ENCODE measurements at regions of chr14 and their contacts with region 1.

Region 1: GRCh38 chr14:105505091-105505490 is 14.0 kb downstream of the TEDC1 start:
- DNase-seq: no peak
- H3K4me3 ChIP-seq: no peak overlapping the region
- H3K4me3 Mint-ChIP-seq: no peak overlapping the region
- H3K27ac ChIP-seq: no peak overlapping the region
- H3K27ac Mint-ChIP-seq: no peak overlapping the region
- H3K4me1 ChIP-seq: no peaks in the 10 kb centered on the region
- H3K4me1 Mint-ChIP-seq: no peaks in the 10 kb centered on the region
- H3K27me3 ChIP-seq: peaks cover 0 to 4% of the 10 kb centered on the region in 2 donors
- H3K27me3 Mint-ChIP-seq: peaks cover 25 to 39% (median 28%) of the 10 kb centered on the region in 3 donors
- CTCF ChIP-seq: no peak

Region 2: DNA sequence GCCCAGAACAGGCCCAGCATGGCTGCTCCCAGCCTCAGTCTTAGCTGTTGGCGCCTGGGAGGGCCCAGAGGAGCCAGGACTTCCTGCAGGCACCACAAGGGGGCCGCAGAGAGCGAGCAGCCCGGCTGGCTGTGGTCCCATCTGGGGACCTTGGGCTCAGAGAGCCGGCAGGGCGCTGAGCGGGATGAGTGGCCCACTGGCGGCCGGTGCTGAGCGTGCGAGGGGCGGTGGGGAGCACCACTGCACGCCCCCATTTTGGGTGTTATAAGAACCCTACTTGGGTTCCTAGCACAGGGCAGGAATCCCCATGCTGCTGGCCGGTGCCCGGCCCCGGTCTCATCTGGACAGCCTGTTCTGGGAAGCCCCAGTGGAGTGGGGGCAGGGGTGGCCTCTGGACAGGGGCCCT is 56.4 kb before region 1 on chr14:
- intact Hi-C with region 1: loop called in 1 of 2 experiments (anchors 5 kb)
- DNase-seq: peak; percentile 35 to 53 (median 51)
- H3K4me3 ChIP-seq: no peak overlapping the region
- H3K4me3 Mint-ChIP-seq: no peak overlapping the region
- H3K27ac ChIP-seq: no peak overlapping the region
- H3K27ac Mint-ChIP-seq: peak overlapping the region in 1 of 7 donors; percentile 11
- H3K4me1 ChIP-seq: no peaks in the 10 kb centered on the region
- H3K4me1 Mint-ChIP-seq: no peaks in the 10 kb centered on the region
- H3K27me3 ChIP-seq: no peaks in the 10 kb centered on the region
- H3K27me3 Mint-ChIP-seq: no peaks in the 10 kb centered on the region
- CTCF ChIP-seq: peak; percentile 84

Region 3: GRCh38 chr14:105999361-106000028 is 494.4 kb after region 1 on chr14:
- intact Hi-C with region 1: no loop called
- DNase-seq: peak; percentile 37 to 59 (median 44)
- H3K4me3 ChIP-seq: no peak overlapping the region
- H3K4me3 Mint-ChIP-seq: no peak overlapping the region
- H3K27ac ChIP-seq: no peak overlapping the region
- H3K27ac Mint-ChIP-seq: peak overlapping the region in 1 of 7 donors; percentile 25
- H3K4me1 ChIP-seq: peaks cover 0 to 11% of the 10 kb centered on the region in 2 donors
- H3K4me1 Mint-ChIP-seq: peaks cover 10% of the 10 kb centered on the region
- H3K27me3 ChIP-seq: no peaks in the 10 kb centered on the region
- H3K27me3 Mint-ChIP-seq: peaks cover 0 to 1% (median 0%) of the 10 kb centered on the region in 3 donors
- CTCF ChIP-seq: peak; percentile 68

Measured in CD14-positive monocyte (primary cell).